ENCODE measurements at regions of chr3 and their contacts with region 1.

Region 1: DNA sequence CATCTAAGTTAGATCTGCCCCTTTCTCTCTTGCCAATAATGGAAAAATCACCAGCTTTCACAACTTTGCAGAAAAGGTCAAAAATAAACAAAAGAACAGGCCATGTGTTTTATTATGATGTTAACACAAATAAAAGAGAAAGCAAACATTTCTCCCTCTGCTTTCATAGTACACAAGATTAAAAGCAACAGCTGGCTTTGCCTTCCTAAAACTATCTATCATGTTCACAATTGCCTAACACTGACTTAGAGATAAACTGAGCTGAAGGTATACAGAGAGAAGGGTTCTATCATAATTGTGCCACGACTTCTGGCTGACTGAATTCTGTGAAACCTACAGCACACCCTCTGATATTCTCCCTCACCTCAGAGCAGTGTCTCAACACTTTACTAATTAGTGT is 29.4 kb downstream of the AADAC start:
- DNase-seq: no peak
- H3K4me3 ChIP-seq: no peak overlapping the region
- H3K27ac ChIP-seq: no peak overlapping the region
- H3K4me1 ChIP-seq: no peaks in the 10 kb centered on the region
- H3K27me3 ChIP-seq: no peaks in the 10 kb centered on the region
- CTCF ChIP-seq: no peak
- POLR2A ChIP-seq: no peak

Region 2: DNA sequence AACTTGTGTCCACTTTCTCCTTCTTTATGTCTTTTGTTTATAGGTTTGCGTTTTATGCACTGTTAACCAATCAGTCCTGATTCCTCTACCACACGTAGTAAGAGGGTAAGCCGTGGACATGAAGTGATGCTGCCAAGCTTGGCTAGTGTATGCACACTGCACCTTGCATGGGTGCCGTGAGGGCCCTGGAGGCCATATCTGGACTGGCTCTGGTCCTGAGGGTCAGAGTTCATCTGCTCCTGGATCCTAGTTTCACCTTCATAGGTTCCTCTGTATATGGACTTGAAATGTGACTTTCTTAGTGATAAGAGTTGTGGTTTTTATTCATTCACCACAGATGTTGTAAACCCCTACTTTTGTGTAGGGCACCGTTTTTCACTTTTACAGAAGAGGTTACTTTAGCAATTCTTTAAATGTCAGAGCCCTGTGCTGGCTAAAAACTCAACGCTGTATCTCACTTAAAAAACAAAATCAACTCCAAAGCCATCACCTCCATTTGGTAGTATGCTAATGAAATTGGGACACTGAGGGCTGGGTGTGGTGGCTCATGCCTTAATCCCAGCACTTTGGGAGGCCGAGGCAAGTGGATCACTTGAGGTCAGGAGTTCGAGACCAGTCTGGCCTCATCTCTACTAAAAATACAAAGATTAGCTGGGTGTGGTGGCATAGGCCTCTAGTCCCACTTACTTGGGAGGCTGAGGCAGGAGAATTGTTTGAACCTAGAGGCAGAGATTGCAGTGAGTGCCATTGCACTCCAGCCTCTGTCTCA is 1103.2 kb before region 1 on chr3:
- intact Hi-C with region 1: no loop called
- DNase-seq: no peak
- H3K4me3 ChIP-seq: no peak overlapping the region
- H3K27ac ChIP-seq: no peak overlapping the region
- H3K4me1 ChIP-seq: peaks cover 21% of the 10 kb centered on the region
- H3K27me3 ChIP-seq: no peaks in the 10 kb centered on the region
- CTCF ChIP-seq: no peak
- POLR2A ChIP-seq: no peak

Region 3: GRCh38 chr3:151439652-151440129 is 403.6 kb before region 1 on chr3:
- intact Hi-C with region 1: loop called (anchors 5 kb)
- DNase-seq: peak; percentile 56
- H3K4me3 ChIP-seq: no peak overlapping the region
- H3K27ac ChIP-seq: no peak overlapping the region
- H3K4me1 ChIP-seq: no peaks in the 10 kb centered on the region
- H3K27me3 ChIP-seq: no peaks in the 10 kb centered on the region
- CTCF ChIP-seq: peak; percentile 81 to 88 (median 88)
- POLR2A ChIP-seq: no peak

Region 4: GRCh38 chr3:151753846-151754245 is 89.4 kb before region 1 on chr3:
- intact Hi-C with region 1: no loop called
- DNase-seq: no peak
- H3K4me3 ChIP-seq: no peak overlapping the region
- H3K27ac ChIP-seq: no peak overlapping the region
- H3K4me1 ChIP-seq: no peaks in the 10 kb centered on the region
- H3K27me3 ChIP-seq: no peaks in the 10 kb centered on the region
- CTCF ChIP-seq: no peak
- POLR2A ChIP-seq: no peak

Region 5: GRCh38 chr3:151918253-151919029 is 75.2 kb after region 1 on chr3:
- intact Hi-C with region 1: loop called (anchors 10 kb)
- DNase-seq: no peak
- H3K4me3 ChIP-seq: no peak overlapping the region
- H3K27ac ChIP-seq: no peak overlapping the region
- H3K4me1 ChIP-seq: no peaks in the 10 kb centered on the region
- H3K27me3 ChIP-seq: no peaks in the 10 kb centered on the region
- CTCF ChIP-seq: peak; percentile 44 to 61 (median 46)
- POLR2A ChIP-seq: no peak

Region 6: GRCh38 chr3:153246806-153247205 is 1403.5 kb after region 1 on chr3:
- intact Hi-C with region 1: no loop called
- DNase-seq: no peak
- H3K4me3 ChIP-seq: no peak overlapping the region
- H3K27ac ChIP-seq: peak overlapping the region in 1 of 2 donors; percentile 8
- H3K4me1 ChIP-seq: no peaks in the 10 kb centered on the region
- H3K27me3 ChIP-seq: no peaks in the 10 kb centered on the region
- CTCF ChIP-seq: no peak
- POLR2A ChIP-seq: no peak